Activated T-helper 2 cell treated with anti-CD3 and anti-CD28 coated beads, Interferon-gamma antibody, Interleukin-2, Interleukin-4, amounts not matched to agents 10 μg/mL and 5 μg/mL and 100 μg/mL, durations not matched to agents 14 hours and 24 hours and 36 hours (primary cell): ENCODE measurements at regions of chr4 and their contacts with region 1.

Region 1: GRCh38 chr4:109967797-109968507 is 55.3 kb downstream of the EGF start:
- DNase-seq: no peak
- H3K4me3 Mint-ChIP-seq: no peak overlapping the region
- H3K27ac Mint-ChIP-seq: no peak overlapping the region
- H3K4me1 Mint-ChIP-seq: peaks cover 17% of the 10 kb centered on the region
- H3K27me3 Mint-ChIP-seq: peaks cover 30% of the 10 kb centered on the region

Region 2: DNA sequence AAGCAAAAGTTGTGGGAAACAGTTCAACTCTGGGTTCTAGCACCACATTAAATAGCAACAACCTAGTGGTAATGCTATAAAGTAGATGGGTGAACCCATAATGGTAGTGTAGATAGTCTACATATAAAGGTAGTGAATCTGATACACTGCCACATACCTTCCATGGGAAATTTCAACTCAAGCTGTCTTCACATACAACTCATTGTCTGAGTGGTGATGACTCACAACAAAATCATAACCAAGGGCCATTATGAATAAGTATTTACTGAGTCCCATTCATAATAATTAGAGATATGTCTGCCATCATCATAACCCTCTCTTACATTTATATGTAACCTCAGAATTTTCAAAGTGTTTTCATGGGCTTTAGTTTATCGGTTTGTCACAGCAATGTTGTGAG is 20.5 kb before region 1 on chr4:
- intact Hi-C with region 1: loop called (anchors 1 kb)
- DNase-seq: no peak
- H3K4me3 Mint-ChIP-seq: no peak overlapping the region
- H3K27ac Mint-ChIP-seq: no peak overlapping the region
- H3K4me1 Mint-ChIP-seq: peaks cover 9% of the 10 kb centered on the region
- H3K27me3 Mint-ChIP-seq: no peaks in the 10 kb centered on the region

Region 3: GRCh38 chr4:110347805-110348204 is 379.9 kb after region 1 on chr4:
- intact Hi-C with region 1: no loop called
- DNase-seq: no peak
- H3K4me3 Mint-ChIP-seq: no peak overlapping the region
- H3K27ac Mint-ChIP-seq: no peak overlapping the region
- H3K4me1 Mint-ChIP-seq: no peaks in the 10 kb centered on the region
- H3K27me3 Mint-ChIP-seq: peaks cover 24% of the 10 kb centered on the region